Right ventricle myocardium inferior (tissue), 1 donor: ENCODE measurements at regions of chr18 and their contacts with region 1.

Region 1: DNA sequence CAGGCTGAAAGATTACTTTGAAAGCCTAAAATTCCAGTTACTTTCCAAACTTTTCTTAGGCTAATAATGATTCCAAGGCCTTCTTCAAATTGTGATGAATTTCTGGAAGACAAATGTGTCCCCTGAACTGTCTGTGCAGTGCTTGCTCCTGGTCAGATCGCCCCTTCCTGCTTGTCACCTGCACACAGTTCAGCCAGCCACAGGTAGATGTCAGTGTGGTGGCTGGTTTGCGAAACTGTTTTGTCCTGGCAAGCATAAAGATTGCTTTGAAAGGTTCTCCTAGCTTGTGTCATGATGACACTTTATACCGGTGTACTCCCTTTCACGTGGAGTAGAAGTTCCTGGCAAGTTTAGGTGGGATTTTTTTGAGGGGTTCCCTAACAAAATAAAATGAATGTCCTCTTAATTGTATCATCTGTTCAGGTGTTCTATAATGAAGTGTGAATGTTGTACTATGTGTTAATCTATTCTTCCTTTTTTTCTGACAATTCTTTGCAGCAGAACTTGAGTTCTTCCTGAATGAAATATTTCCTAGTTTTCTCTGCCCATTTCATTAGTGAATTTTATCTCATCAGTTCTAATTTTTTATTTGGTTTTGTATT is 298.8 kb downstream of the ZNF407 start:
- DNase-seq: no peak
- ATAC-seq: peak; percentile 52

Region 2: DNA sequence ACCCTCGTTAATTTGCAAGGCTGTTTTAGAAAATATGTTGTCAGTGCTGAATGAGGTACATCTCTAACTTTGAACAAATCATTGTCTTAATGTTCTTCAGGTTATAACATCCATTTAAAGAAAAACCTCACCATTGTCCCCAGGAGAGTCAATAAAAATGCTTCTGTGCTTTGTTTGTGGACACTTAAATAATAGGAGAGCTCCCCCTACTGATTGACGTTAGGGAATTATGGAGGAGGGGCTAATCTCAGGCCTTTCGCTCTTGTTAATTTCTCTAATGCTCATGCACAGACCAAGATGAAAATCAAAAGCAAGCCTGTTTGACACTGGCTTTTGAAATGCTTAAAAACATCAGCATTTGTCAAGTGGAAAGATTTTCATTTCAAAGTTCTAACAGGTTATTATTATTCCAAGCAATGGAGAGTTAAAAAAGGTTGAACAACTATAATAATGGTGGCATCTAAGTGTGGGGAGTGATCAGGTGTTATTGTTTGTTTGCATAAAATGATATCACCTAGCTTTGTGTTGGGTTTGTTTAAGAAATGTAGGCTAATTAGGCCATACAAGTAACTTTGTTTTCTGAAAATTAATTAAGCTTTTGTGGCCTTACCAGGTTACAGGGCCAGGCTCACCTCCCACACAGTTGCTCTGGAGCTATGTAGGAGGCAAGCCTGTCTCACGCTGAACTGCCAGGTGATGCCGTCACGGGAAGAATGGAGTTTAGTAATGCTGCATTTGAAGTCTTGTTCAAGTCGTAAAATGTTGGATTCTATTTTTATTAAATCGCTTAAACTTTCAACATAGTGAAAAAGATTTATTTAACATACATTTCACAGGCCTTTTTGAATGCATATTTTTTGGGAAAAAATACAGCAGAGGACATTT is 582.7 kb after region 1 on chr18:
- intact Hi-C with region 1: loop called (anchors 5 kb)
- DNase-seq: no peak
- ATAC-seq: peak; percentile 68